G401 (cell line): ENCODE measurements at regions of chr1 and their contacts with region 1.

Region 1: DNA sequence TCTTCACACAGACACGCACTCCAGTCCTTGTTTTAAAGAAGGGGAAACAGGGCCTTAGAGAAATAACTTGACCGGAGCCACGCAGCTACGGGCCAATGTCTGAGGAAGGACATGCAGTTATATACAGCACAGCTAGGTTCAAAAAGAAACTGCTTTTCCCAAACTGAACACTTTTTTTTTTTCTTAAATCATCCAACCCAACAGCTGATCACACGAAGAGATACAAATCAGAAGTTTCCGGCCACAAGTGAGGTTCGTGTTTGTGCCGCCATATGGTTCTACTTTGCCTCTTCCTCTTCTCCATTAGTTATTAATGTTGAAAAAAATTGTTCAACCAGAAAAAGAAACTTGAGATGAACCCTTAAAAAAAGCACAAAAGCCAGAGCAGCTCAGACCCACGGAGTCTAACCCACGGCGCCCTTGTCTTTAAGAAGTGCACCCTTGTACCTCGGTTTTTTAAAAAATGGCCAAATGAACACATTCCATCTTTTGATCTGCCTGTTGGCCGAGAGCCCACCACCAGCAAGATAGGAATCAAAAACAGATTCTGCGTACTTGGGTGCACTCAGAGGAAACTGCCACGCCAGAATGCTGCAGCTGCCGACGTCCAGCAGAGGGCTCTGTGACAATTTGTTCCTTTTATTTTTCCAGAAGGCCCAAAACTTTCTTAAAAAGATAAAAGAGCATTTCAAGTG is 78.9 kb downstream of the SLC66A1 start:
- DNase-seq: peak; percentile 62

Region 2: DNA sequence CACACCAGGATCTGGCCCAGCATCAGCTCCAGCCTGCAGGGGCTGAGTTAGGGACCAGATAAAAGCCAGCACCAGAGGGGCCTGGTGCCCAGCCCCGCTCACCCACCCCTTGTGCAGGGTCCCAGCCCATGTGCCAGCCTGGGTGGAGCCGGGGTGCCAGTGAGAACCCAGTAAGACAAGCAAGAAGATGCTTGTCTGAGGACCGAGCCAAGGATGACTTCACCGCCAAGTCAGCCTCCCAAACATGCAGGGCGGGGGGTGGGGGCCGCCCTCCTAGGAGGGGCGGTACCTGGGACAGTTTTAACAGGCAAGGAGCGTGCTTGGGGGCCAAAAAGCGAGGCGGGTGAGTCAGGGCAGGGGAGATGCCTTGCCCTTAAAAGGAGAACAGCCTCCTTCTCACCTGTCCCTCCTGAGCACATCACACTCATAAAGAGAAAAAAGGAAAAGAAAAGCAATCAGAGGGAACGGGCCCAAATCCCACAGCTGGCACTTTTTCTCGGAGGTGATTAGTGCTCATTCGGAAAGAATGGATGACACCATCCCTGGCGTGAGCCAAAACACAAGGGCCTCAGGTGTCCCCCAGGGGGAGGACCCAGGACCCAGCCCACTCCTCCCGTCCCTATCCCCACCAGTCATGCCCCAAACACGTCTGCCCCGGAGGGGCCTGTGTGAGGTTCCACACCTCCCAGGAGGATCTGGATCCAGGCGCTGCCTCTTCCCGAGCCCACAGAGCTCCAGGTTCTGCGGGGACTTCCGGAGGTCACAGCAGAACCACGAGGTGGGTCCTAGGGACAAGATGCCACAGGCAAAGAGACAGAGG is 357.0 kb before region 1 on chr1:
- in situ Hi-C with region 1: no loop called
- DNase-seq: no peak

Region 3: GRCh38 chr1:19596714-19597495 is 205.9 kb after region 1 on chr1:
- in situ Hi-C with region 1: loop called (anchors 25 kb)
- DNase-seq: peak; percentile 99